OCI-LY7 (cell line): ENCODE measurements at regions of chr2 and their contacts with region 1.

Region 1: GRCh38 chr2:137173463-137173862 is 408.1 kb downstream of the THSD7B start:
- DNase-seq: peak; percentile 3
- H3K4me3 ChIP-seq: no peak overlapping the region
- H3K27ac ChIP-seq: no peak overlapping the region
- H3K4me1 ChIP-seq: no peaks in the 10 kb centered on the region
- CTCF ChIP-seq: peak; percentile 58

Region 2: DNA sequence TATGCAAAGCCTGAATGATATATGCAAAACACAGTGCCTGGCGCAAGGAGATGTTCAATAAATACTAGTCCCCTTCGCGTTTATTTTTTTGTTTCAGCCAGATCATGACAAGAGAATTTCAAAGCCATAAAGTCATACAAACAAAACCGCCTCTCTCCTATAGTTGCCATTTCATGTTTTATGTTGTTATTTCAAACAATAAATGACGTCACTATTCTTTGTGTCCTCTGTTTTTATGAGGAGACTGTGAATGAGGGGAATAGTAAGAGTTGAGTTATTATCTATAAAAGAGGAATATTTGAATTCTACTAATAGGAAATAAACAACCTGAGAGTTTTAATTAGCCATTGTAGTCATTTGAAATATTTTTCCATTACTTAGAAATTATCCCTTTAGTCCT is 56.4 kb after region 1 on chr2:
- CTCF ChIA-PET with region 1: no interaction called
- POLR2A ChIA-PET with region 1: no interaction called
- intact Hi-C with region 1: loop called (anchors 5 kb)
- DNase-seq: no peak
- H3K4me3 ChIP-seq: no peak overlapping the region
- H3K27ac ChIP-seq: no peak overlapping the region
- H3K4me1 ChIP-seq: no peaks in the 10 kb centered on the region
- CTCF ChIP-seq: no peak